ENCODE measurements at regions of chr1 and their contacts with region 1.

Region 1: GRCh38 chr1:224513787-224514209 is 79.2 kb upstream of the WDR26 start:
- DNase-seq: peak; percentile 88
- CTCF ChIP-seq: peak; percentile 93

Region 2: DNA sequence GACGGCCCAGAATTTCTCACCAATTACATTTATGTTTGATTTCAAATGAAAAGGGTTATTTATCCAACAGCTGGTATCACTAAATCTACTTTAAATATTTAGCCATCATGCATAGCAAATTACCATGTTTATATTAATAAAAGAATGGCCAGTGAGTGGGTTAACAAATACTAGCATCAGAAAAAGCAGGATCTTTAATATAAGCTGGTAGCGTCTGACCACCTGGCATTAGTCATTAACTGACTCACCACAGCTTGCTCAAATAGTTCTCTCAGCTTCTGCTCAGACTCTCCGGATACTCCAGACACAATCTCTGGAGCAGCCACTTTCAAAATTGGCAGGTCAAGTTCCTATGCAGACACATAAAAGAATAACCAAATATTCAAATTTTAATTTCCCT is 213.5 kb before region 1 on chr1:
- CTCF ChIA-PET with region 1: no interaction called
- POLR2A ChIA-PET with region 1: no interaction called
- DNase-seq: no peak
- CTCF ChIP-seq: no peak

Region 3: GRCh38 chr1:224329842-224330753 is 183.7 kb before region 1 on chr1 and contains the start of gene NVL:
- CTCF ChIA-PET with region 1: no interaction called
- POLR2A ChIA-PET with region 1: no interaction called
- DNase-seq: peak; percentile 87
- CTCF ChIP-seq: no peak

Region 4: DNA sequence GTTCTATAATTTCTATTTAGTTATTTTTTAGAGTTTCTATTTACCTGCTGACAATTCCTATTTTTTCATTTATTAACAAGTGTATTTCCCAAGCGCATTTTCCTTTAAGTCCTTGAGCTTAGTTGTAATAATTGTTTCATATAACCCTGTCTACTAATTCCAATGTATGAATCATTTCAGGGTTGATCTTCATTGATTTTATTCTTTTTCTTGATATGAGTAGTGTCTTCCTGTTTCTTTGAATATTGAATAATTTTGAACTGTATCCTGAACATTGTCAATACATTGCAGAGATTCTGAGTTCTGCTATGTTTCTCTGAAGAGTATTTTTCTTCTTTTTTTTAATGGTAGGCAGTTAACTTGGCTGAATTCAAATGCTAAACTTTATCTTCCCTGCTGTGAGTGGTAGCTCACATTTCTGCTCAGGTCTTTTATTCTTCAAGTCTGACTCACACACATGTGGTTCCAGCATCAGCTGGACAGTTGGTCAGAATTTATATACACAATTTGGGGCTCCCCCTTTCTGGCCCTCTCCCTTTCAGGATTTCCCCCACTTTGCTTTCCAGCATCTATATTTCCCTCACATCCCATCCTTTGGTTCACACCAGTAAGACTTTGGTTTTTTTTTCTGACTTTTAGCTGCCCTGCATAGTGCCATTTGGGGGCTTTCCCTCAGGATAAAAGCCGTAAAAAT is 24.8 kb before region 1 on chr1:
- CTCF ChIA-PET with region 1: interaction called, 12 read pairs
- POLR2A ChIA-PET with region 1: no interaction called
- DNase-seq: no peak
- CTCF ChIP-seq: no peak

Region 5: DNA sequence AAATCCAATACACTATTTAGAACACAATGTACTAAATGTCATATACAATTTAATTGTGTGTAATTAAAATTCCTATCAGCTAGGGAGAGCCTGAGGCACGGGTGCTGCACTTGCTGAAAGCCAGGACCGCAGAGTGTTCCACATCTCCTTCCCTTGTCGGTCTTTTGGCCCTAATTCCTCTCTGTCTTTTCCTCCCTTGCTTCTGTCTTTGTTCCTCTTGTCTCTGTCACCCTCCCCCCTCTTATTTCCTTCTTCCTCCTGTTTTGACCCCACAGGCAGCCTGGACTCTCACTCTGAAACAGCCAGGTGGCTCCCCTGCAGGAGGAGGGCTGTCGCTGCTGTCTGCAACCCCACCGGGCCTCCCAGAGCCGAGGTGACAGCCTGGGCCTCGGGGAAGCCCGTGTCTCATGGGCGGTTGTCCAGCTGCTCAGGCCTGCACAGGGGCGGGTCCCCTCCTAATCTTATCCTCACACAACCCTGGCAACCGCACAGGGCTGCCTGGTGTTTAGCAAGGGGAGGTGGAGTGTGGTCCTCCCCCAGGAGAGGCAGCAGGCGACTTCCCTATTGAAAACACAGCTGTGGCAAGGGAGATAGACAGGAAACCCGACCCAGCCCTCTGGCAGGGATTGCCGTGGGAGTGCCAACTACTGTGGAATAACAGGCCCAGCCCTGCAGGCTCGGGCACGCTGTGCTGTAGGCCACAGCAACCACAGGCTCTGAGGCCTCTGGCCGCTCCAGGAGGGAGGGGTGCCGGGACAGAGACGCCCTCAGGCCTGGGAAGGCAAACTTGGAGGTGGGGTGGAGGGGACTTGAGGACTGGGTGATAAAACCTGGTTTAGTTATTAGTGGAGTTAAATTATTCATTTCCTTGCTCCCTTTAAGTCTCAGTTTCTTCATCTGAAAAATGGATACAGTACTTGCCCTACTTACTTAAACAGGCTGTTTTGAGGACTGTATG is 10.4 kb before region 1 on chr1:
- CTCF ChIA-PET with region 1: interaction called, 53 read pairs
- POLR2A ChIA-PET with region 1: no interaction called
- DNase-seq: peak; percentile 89
- CTCF ChIP-seq: peak; percentile 30

Region 6: DNA sequence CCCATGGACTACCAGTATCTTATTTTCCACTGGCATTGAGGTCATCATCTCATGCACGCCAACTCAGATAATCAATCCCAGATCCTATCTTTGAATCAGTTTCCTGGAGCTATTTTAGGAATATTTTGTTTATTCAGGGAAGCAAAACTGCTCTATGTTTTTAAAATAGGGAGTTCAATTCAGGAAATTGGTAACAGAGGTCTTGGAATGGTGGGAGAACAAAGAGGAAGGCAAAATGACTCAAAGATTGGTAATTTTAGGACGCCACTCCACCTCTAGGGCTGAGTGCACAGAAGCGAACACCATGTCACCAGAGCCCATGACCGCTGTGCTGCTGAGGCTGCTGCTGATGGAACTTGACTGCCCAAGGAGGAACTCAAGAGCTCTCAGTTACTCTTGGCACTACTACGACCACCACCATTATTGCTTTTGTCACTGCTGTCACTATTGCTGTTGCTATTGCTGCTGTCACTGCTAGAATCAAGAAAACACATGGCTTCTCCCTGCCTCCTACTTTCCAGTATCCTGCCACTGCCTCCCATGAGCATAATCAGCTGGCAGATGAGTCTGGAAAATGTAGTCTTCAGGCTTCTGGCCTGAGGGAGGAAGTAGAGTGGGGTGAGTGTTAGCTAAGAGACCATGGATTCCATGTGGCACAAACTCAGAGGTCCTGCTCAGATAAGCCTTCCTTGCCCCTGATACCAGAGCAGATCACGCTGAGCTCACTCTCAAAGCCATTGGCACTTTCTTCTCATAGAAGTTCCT is 30.7 kb after region 1 on chr1:
- CTCF ChIA-PET with region 1: interaction called, 11 read pairs
- POLR2A ChIA-PET with region 1: no interaction called
- DNase-seq: no peak
- CTCF ChIP-seq: no peak

Region 7: GRCh38 chr1:224739997-224740684 is 226.3 kb after region 1 on chr1:
- CTCF ChIA-PET with region 1: no interaction called
- POLR2A ChIA-PET with region 1: no interaction called
- DNase-seq: peak; percentile 67
- CTCF ChIP-seq: no peak

Region 8: GRCh38 chr1:224929335-224930237 is 415.8 kb after region 1 on chr1 and contains the start of gene DNAH14:
- CTCF ChIA-PET with region 1: interaction called, 63 read pairs
- POLR2A ChIA-PET with region 1: no interaction called
- DNase-seq: peak; percentile 35
- CTCF ChIP-seq: no peak